ENCODE measurements at regions of chr6 and their contacts with region 1.

Region 1: DNA sequence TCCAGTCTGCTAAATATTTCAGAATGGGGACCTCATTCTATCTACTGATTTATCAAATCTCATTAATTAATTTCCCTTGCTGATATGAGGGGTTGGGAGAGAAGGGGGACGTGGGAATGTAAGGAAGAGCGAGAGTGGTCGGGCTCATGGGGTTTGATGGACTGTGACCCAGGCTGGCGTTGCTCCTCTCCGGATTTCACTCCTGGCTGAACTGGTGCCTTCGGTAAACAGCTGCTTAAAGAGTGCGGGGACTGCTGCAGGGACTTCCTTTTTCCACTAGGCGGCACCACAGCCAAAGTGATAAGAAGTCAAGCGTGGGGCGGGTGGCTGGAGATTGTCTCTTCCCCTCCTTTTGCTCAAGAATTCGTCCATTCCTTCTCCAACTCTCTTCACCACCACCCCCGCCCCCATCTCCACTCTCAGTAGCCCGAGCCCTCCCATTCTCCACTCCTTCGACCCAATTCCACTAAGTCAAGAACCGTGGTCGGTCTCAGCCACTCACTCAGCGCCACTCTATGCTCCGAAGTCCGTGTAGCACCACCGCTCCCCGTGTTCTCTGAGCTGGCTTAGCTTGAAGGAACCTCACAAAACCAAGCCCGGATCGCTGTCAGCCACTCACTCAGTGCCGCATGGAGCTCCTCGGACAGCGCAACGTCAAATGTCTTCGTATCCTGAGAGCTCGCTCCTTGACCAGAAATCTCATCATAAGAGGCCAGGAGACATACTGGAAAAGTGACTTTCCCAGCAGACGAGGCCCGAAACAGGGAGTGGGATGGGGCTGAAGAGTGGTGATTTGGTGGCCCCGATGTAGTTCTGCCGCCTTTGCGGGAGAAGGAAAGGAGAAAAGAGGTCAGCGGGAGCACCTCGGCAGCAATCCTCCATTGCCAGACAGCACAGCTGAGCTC is 9.7 kb downstream of the TRIM31 start:
- DNase-seq: peak; percentile 91
- H3K4me3 Mint-ChIP-seq: peak overlapping the region; percentile 73
- H3K27ac Mint-ChIP-seq: no peak overlapping the region
- H3K4me1 Mint-ChIP-seq: peaks cover 41% of the 10 kb centered on the region
- H3K27me3 Mint-ChIP-seq: peaks cover 41% of the 10 kb centered on the region

Region 2: GRCh38 chr6:30061092-30061857 is 41.9 kb before region 1 on chr6 and contains the start of gene POLR1H:
- CTCF ChIA-PET with region 1: interaction called, 28 read pairs
- POLR2A ChIA-PET with region 1: interaction called, 4 read pairs
- intact Hi-C with region 1: loop called (anchors 2 kb)
- DNase-seq: peak; percentile 92
- H3K4me3 Mint-ChIP-seq: peak within 1 kb of the TSS; percentile 99
- H3K27ac Mint-ChIP-seq: peak within 1 kb of the TSS; percentile 99
- H3K4me1 Mint-ChIP-seq: peaks cover 35% of the 10 kb centered on the region
- H3K27me3 Mint-ChIP-seq: no peaks in the 10 kb centered on the region
- total RNA-seq, gene POLR1H: 69.4 to 73.2 TPM

Region 3: DNA sequence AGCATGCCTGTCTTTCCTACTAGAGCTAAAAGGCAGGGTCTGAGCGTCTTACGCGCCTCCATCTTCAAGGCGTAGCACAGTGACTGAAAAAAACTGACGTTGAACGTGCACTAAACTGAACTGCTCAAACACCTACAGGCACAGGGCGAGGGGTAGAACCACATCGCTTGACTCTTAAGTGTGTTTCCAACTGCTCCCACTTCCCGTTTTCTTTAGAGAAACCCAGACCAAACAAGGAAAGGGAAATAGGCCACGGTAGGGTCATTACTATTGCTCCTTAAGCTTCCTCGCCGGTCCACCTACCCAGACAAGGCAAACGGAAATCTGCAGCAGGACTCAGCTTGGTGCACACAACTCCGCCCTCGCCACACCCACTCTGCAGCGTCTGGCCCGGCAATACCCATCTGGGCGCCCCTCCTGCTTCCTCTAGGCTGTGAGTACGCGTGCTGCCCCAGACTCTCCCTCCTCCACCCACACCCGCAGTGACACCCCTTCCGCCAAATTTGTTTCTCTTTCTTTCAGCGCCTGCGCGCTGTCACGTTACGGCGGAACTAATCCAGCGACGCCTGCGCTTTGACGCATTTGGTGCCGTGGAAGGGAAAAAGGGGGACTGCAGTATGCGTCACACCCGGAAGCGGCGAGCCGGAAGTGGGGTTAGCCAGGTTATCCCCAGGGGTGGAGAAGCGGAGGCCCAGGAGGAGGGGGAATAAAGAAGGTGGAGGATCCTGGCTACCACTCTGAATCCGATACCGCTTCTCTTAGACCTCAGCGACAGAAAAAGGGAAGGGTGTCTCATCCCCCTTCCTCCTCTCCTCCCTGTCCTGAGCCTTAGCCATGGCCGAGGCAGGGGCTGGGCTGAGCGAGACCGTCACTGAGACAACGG is 36.4 kb before region 1 on chr6 and contains the start of gene PPP1R11:
- CTCF ChIA-PET with region 1: interaction called, 28 read pairs
- POLR2A ChIA-PET with region 1: interaction called, 4 read pairs
- intact Hi-C with region 1: loop called (anchors 2 kb)
- DNase-seq: peak; percentile 100
- H3K4me3 Mint-ChIP-seq: peak within 1 kb of the TSS; percentile 88
- H3K27ac Mint-ChIP-seq: peak within 1 kb of the TSS; percentile 95
- H3K4me1 Mint-ChIP-seq: peaks cover 50% of the 10 kb centered on the region
- H3K27me3 Mint-ChIP-seq: peaks cover 8% of the 10 kb centered on the region
- total RNA-seq, gene PPP1R11: 51.3 to 55.0 TPM

Region 4: GRCh38 chr6:30169658-30170614 is 66.7 kb after region 1 on chr6:
- CTCF ChIA-PET with region 1: interaction called, 43 read pairs
- POLR2A ChIA-PET with region 1: interaction called, 3 read pairs
- intact Hi-C with region 1: loop called (anchors 1 kb)
- DNase-seq: no peak
- H3K4me3 Mint-ChIP-seq: no peak overlapping the region
- H3K27ac Mint-ChIP-seq: no peak overlapping the region
- H3K4me1 Mint-ChIP-seq: peaks cover 26% of the 10 kb centered on the region
- H3K27me3 Mint-ChIP-seq: peaks cover 35% of the 10 kb centered on the region

Region 5: GRCh38 chr6:30219244-30219643 is 116.0 kb after region 1 on chr6:
- CTCF ChIA-PET with region 1: interaction called, 15 read pairs
- POLR2A ChIA-PET with region 1: no interaction called
- intact Hi-C with region 1: no loop called
- DNase-seq: peak; percentile 60
- H3K4me3 Mint-ChIP-seq: no peak overlapping the region
- H3K27ac Mint-ChIP-seq: no peak overlapping the region
- H3K4me1 Mint-ChIP-seq: peaks cover 17% of the 10 kb centered on the region
- H3K27me3 Mint-ChIP-seq: no peaks in the 10 kb centered on the region

Region 6: GRCh38 chr6:30396833-30397479 is 293.7 kb after region 1 on chr6:
- CTCF ChIA-PET with region 1: no interaction called
- POLR2A ChIA-PET with region 1: no interaction called
- intact Hi-C with region 1: no loop called
- DNase-seq: peak; percentile 90
- H3K4me3 Mint-ChIP-seq: no peak overlapping the region
- H3K27ac Mint-ChIP-seq: no peak overlapping the region
- H3K4me1 Mint-ChIP-seq: no peaks in the 10 kb centered on the region
- H3K27me3 Mint-ChIP-seq: peaks cover 24% of the 10 kb centered on the region